Aorta (tissue), 5 donors: ENCODE measurements at regions of chr12 and their contacts with region 1.

Region 1: DNA sequence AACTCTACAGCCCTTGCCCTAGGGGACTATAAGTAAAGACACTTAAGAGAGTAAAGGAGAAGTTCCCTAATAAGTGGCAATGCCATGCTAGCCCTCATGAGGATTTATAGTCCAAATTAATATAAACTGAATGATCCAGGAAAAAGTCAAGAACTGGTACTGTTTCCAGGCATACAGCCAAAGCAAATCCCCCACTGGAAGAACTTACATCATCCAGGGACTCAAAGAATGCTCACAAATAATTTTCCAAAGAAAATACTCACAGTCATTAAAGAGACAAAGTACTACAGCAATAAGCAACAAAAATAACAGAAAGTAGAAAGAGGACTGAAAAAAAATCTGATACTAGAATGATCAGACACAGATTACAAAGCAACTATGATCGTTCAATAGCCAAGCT is 79.7 kb upstream of the RAP1B start:
- DNase-seq: peak in 1 of 2 donors; percentile 45
- ATAC-seq: peak; percentile 86
- H3K4me3 ChIP-seq: no peak overlapping the region
- H3K27ac ChIP-seq: no peak overlapping the region
- H3K4me1 ChIP-seq: no peaks in the 10 kb centered on the region
- H3K27me3 ChIP-seq: no peaks in the 10 kb centered on the region

Region 2: DNA sequence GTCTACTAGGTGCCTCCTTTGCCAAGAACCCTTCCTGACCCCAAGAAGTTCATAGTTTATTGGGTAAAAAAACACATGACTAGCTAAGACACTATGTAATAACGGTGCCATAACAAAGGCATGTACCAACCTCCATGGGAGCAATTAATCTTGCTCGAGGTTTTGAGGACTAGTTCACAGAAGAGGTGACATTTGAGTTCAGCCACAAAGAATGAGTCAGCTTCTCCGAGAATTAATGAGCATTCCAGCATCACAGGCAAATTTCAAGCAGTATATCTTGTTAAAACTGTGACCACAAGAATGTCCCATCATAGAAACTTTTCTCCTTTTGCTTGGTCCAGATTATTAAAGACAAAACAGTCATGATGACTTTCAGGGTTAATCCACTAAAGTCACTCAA is 33.3 kb before region 1 on chr12:
- intact Hi-C with region 1: loop called (anchors 5 kb)
- DNase-seq: no peak
- ATAC-seq: peak; percentile 46
- H3K4me3 ChIP-seq: no peak overlapping the region
- H3K27ac ChIP-seq: no peak overlapping the region
- H3K4me1 ChIP-seq: peaks cover 0 to 2% of the 10 kb centered on the region in 2 donors
- H3K27me3 ChIP-seq: no peaks in the 10 kb centered on the region